HepG2 (cell line): ENCODE measurements at regions of chr17 and their contacts with region 1.

Region 1: DNA sequence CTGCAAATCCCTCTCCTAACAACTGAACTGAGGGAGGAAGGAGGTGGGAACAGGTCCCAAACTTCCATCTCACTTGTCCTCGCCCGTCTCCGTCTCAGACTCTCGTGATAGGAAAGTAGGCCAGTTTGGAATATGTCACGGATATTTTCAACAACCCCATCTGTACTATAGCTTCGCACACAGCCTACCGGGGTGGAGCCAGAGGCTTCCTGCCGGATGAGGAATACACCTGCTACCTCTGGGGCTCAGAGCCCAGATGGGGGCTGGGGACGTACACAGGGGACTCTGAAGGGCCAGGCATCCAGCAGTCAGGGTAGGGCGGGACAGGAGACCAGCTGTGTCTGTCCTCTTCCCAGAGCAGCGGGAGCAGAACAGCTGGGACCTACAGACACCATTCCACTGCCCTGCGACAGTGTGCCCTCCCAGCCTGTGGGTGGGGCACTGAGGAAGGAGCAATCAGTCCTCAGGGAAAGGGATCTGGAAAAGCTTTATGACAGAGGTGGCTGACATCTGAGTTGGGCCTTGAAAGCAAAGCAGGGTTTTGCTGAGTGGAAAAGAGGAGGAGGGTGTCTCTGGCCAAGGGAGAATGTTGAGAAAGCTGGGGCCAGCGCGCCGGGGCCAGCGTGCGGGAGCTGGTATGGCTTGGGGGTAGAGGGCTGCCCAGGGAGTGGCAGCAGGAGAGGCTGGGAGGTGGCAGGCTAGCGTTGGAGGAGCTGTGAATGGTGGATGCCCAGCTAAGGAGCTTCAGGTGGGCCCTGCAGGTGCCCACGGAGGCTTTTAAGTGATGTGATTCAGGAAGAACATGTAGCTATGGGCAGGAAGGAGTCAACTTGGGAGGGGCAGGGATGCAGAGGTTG is 11.5 kb upstream of the SRCIN1 start:
- DNase-seq: no peak
- ATAC-seq: no peak
- H3K4me3 ChIP-seq: no peak overlapping the region
- H3K27ac ChIP-seq: peak overlapping the region; percentile 95
- H3K4me1 ChIP-seq: peaks cover 100% of the 10 kb centered on the region
- H3K27me3 ChIP-seq: no peaks in the 10 kb centered on the region
- CTCF ChIP-seq: 0 out of 2 replicates have a peak, but pooled peaks have one; percentile 13
- EP300 ChIP-seq: no peak; a peak in 1 of 4 replicates
- POLR2A ChIP-seq: no peak
- RAD21 ChIP-seq: no peak; the same call in 1 of the 2 replicates

Region 2: DNA sequence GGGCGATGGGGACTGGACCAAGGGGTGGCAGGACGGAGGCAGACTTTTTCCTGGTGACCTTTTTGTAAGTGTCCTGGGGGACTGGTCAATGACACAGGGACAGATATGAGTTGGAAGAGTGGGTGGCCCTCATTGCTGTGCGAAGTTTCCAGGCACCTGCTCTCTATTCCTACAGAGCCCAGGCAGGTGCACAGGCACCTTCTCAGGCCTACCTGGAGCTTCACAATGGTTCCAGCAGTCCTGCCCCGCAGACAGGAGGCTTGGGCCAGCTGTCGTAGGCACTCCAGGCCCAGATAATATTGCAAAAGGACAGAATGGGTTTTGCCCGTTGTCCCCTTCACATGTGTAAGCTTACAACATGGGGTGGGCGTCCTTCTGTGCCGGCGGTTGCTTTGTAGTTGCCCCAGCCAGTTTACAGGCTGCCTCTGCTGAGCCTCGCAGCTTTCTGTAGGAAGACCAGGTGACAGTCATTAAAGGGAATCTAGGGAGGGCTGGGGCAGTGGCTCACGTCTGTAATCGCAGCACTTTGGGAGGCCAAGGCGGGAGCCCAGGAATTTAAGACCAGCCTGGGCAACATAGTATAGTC is 104.7 kb before region 1 on chr17:
- CTCF ChIA-PET with region 1: no interaction called
- POLR2A ChIA-PET with region 1: no interaction called
- in situ Hi-C with region 1: no loop called
- intact Hi-C with region 1: no loop called
- DNase-seq: no peak
- ATAC-seq: no peak
- H3K4me3 ChIP-seq: no peak overlapping the region
- H3K27ac ChIP-seq: no peak overlapping the region
- H3K4me1 ChIP-seq: peaks cover 22% of the 10 kb centered on the region
- H3K27me3 ChIP-seq: peaks cover 5 to 52% of the 10 kb centered on the region in 2 experiments; a peak in 4 of 5 replicates
- CTCF ChIP-seq: no peak
- EP300 ChIP-seq: no peak
- POLR2A ChIP-seq: no peak
- RAD21 ChIP-seq: no peak

Region 3: DNA sequence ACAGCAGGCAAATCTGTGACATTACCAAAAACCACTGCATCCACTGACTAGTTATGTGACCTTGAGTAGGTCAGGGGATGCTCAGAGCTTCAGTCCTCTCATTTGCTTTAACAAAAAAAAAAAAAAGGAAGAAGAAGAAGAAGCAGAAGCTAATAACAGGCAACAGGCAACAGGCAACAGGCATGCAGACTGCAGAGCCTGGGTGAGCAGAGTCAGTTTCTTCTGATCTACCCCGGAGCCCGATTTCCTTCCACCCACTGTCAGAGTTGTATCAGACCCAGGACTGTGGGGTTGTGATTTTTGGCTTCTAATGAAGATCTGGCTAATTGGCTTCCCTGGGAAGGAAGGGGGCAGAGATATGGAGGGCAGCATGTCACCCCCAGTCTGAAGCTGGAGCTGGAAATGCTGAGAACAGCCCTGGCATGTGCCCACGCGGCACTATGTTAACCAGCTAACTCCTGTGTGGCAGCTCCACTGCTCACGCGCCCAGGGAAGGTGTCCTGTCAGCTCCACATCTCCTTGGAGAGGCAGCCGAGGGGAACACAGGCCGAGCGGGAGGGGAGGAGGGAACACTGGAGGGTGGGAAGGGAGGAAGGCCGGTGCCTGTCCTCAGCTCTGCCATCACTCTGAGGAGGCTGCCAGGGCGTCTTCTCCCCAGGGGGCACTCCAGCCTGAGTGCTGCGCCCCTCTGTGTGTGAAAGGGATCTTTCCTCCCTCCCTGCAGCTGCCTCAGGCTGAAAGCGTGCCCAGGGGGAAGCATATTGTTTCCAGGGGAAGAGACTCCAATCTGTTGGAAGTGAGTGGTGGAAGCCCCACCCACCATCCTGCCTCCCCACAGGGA is 29.1 kb before region 1 on chr17:
- CTCF ChIA-PET with region 1: no interaction called
- POLR2A ChIA-PET with region 1: no interaction called
- in situ Hi-C with region 1: no loop called
- intact Hi-C with region 1: no loop called
- DNase-seq: no peak
- ATAC-seq: no peak
- H3K4me3 ChIP-seq: no peak overlapping the region
- H3K27ac ChIP-seq: no peak overlapping the region
- H3K4me1 ChIP-seq: peaks cover 61% of the 10 kb centered on the region
- H3K27me3 ChIP-seq: peaks cover 0 to 9% of the 10 kb centered on the region in 2 experiments; a peak in 2 of 5 replicates
- CTCF ChIP-seq: no peak
- EP300 ChIP-seq: no peak
- POLR2A ChIP-seq: no peak
- RAD21 ChIP-seq: no peak

Region 4: DNA sequence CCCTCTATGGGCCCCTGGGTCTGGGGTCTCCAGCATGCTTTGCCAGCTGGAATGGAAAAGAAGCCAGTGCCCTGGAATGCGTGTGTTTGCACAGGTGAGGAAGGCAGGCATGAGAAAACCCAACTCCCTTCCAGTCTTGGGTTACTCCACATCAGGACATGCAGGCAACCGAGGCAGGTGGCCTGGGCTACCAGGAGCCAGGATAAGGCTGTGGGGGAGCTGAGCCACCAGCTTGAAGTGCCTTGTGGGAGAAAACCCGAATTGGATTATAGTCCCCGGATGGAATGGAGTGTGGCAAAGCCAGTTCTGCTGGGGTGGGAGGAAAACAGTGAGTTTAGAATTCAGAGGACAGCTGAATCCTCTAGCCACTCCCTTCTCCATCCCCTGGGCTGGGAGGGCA is 18.7 kb before region 1 on chr17:
- CTCF ChIA-PET with region 1: no interaction called
- POLR2A ChIA-PET with region 1: interaction called, 143 read pairs
- in situ Hi-C with region 1: no loop called
- intact Hi-C with region 1: no loop called
- DNase-seq: peak; percentile 82
- ATAC-seq: peak; percentile 53
- H3K4me3 ChIP-seq: no peak overlapping the region
- H3K27ac ChIP-seq: no peak overlapping the region
- H3K4me1 ChIP-seq: peaks cover 81% of the 10 kb centered on the region
- H3K27me3 ChIP-seq: no peaks in the 10 kb centered on the region
- CTCF ChIP-seq: peak; percentile 5; the same call in 1 of the 2 replicates
- EP300 ChIP-seq: no peak
- POLR2A ChIP-seq: peak in 1 of 2 experiments; percentile 26; a peak in 1 of 4 replicates
- RAD21 ChIP-seq: 0 out of 2 replicates have a peak, but pooled peaks have one; percentile 10

Region 5: GRCh38 chr17:38628441-38628840 is 11.2 kb after region 1 on chr17:
- CTCF ChIA-PET with region 1: no interaction called
- POLR2A ChIA-PET with region 1: interaction called, 14 read pairs
- in situ Hi-C with region 1: no loop called
- intact Hi-C with region 1: no loop called
- DNase-seq: peak; percentile 89
- ATAC-seq: peak; percentile 95
- H3K4me3 ChIP-seq: no peak overlapping the region
- H3K27ac ChIP-seq: peak overlapping the region; percentile 59
- H3K4me1 ChIP-seq: peaks cover 50% of the 10 kb centered on the region
- H3K27me3 ChIP-seq: no peaks in the 10 kb centered on the region
- CTCF ChIP-seq: no peak
- EP300 ChIP-seq: no peak
- POLR2A ChIP-seq: 0 out of 4 replicates have a peak, but pooled peaks of 1 of the 2 experiments have one; percentile 42
- RAD21 ChIP-seq: no peak

Region 6: GRCh38 chr17:38667099-38667786 is 50.0 kb after region 1 on chr17:
- CTCF ChIA-PET with region 1: interaction called, 5 read pairs
- POLR2A ChIA-PET with region 1: interaction called, 61 read pairs
- in situ Hi-C with region 1: no loop called
- intact Hi-C with region 1: no loop called
- DNase-seq: peak; percentile 79
- ATAC-seq: peak; percentile 50
- H3K4me3 ChIP-seq: no peak overlapping the region
- H3K27ac ChIP-seq: no peak overlapping the region
- H3K4me1 ChIP-seq: peaks cover 75% of the 10 kb centered on the region
- H3K27me3 ChIP-seq: peaks cover 7 to 28% of the 10 kb centered on the region in 2 experiments; a peak in 4 of 5 replicates
- CTCF ChIP-seq: peak; percentile 99
- EP300 ChIP-seq: no peak
- POLR2A ChIP-seq: no peak
- RAD21 ChIP-seq: peak; percentile 100

Region 7: DNA sequence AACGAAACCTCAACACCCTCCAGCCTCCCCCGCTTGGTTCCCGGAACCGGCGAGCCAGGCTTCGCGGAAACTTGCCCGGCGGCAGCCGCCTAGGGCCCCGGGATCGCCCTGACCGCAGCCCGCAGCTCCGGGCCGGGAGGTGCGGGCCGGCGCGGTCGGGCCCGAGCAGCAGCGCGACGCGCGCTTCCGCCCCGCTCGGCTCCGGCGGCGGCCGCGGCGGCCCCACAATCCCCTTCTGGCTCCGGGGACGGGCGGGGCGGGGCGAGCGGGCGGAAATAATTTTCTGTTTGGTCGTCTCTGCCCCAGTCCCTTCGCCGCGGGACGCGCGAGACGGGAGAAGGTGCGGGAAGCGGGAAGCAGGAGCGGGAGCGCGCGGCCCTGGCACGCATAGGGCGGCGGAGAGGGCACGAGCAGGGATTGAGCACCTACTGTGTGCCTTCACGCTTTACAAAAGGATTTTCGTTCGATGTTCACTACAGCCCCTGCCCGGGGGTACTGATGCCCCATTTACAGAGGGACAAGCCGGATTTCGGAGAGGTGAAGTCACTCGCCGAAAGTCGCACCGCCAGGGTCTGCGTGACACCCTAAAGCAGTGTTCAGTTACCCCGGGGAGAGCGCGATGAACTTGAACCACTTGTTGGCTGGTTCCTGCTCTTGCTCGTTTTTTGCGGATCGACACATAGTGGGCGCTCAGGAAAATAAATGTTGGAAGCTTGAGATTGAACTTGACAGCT is 85.1 kb after region 1 on chr17:
- CTCF ChIA-PET with region 1: no interaction called
- POLR2A ChIA-PET with region 1: interaction called, 13 read pairs
- in situ Hi-C with region 1: no loop called
- intact Hi-C with region 1: no loop called
- DNase-seq: peak; percentile 86
- ATAC-seq: peak; percentile 47
- H3K4me3 ChIP-seq: peak overlapping the region; percentile 63 to 99 (median 71)
- H3K27ac ChIP-seq: peak overlapping the region; percentile 99
- H3K4me1 ChIP-seq: peaks cover 67% of the 10 kb centered on the region
- H3K27me3 ChIP-seq: no peaks in the 10 kb centered on the region; a peak in 1 of 5 replicates
- CTCF ChIP-seq: 0 out of 2 replicates have a peak, but pooled peaks have one; percentile 2
- EP300 ChIP-seq: peak in 1 of 2 experiments; percentile 7; a peak in 2 of 4 replicates
- POLR2A ChIP-seq: peak; percentile 77 to 94
- RAD21 ChIP-seq: peak; percentile 23; the same call in 1 of the 2 replicates